HepG2 (cell line): ENCODE measurements at regions of chr19 and their contacts with region 1.

Region 1: GRCh38 chr19:55339048-55339888 is at the start of gene KMT5C:
- DNase-seq: peak; percentile 100
- ATAC-seq: peak; percentile 91
- H3K4me3 ChIP-seq: peak within 1 kb of the TSS; percentile 82 to 99 (median 91)
- H3K27ac ChIP-seq: peak within 1 kb of the TSS; percentile 86
- H3K4me1 ChIP-seq: peaks cover 31% of the 10 kb centered on the region
- H3K27me3 ChIP-seq: no peaks in the 10 kb centered on the region; a peak in 1 of 5 replicates
- CTCF ChIP-seq: peak; percentile 59
- EP300 ChIP-seq: no peak
- POLR2A ChIP-seq: peak in 1 of 2 experiments; percentile 14; a peak in 2 of 4 replicates
- RAD21 ChIP-seq: peak; percentile 19; the same call in 1 of the 2 replicates
- total RNA-seq, gene KMT5C: 2.1 and 5.5 TPM in 2 replicates

Region 2: DNA sequence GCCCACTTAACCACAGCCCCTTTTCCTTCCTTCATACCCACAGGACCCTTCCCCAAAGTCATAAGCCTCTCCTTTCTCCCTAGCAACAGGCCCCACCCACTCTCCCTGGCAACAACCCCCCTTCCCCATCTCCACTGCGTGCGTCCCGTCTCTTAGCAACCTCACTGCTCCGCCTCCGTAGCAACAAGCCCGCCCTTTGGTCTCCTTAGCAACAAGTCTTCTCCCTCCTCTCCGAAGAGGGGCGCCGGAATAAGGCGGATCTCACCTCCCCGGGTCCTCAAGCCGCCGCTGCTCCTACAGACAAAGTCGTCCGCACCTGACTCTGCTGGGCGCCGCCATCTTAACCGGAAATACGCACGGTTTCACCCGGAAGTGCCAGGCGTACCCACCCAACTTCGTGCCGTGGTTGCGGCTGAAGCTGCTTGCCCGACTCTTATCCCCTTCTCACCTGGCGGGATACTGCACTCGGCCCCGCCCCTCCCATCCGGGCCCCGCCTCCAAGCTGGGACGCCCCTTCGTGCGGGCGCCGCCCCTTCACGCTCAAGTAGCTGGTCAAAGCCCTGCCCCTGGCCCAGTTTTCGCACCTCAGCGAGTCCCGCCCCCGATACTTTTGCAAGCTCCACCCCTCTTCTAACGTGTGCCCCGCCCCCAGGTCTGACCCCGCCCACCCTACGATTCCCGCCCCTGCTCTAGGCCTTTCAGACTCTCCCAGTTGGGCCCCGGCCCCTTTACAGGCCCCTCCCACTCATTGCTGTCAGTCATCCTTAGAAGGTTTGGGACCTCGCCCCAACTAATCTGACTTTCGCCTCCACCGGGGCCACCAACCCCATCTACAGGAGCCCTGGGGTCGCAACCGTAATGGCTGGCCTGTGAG is 59.3 kb before region 1 on chr19 and contains the start of gene HSPBP1:
- CTCF ChIA-PET with region 1: no interaction called
- POLR2A ChIA-PET with region 1: interaction called, 11 read pairs
- in situ Hi-C with region 1: no loop called
- intact Hi-C with region 1: no loop called
- DNase-seq: peak; percentile 92
- ATAC-seq: peak; percentile 90
- H3K4me3 ChIP-seq: peak within 1 kb of the TSS; percentile 86 to 97 (median 93)
- H3K27ac ChIP-seq: peak within 1 kb of the TSS; percentile 68
- H3K4me1 ChIP-seq: peaks cover 24% of the 10 kb centered on the region
- H3K27me3 ChIP-seq: peaks cover 0 to 9% of the 10 kb centered on the region in 2 experiments; a peak in 3 of 5 replicates
- CTCF ChIP-seq: no peak
- EP300 ChIP-seq: no peak
- POLR2A ChIP-seq: peak; percentile 72 to 86
- RAD21 ChIP-seq: peak; percentile 10; the same call in 1 of the 2 replicates
- total RNA-seq, gene HSPBP1: 33.7 and 35.9 TPM in 2 replicates

Region 3: GRCh38 chr19:55322204-55322885 is 16.9 kb before region 1 on chr19:
- CTCF ChIA-PET with region 1: no interaction called
- POLR2A ChIA-PET with region 1: interaction called, 11 read pairs
- in situ Hi-C with region 1: no loop called
- intact Hi-C with region 1: no loop called
- DNase-seq: no peak
- ATAC-seq: peak; percentile 52
- H3K4me3 ChIP-seq: no peak overlapping the region
- H3K27ac ChIP-seq: no peak overlapping the region
- H3K4me1 ChIP-seq: peaks cover 43% of the 10 kb centered on the region
- H3K27me3 ChIP-seq: no peaks in the 10 kb centered on the region; a peak in 1 of 5 replicates
- CTCF ChIP-seq: no peak
- EP300 ChIP-seq: no peak
- POLR2A ChIP-seq: no peak
- RAD21 ChIP-seq: no peak

Region 4: GRCh38 chr19:56111601-56112312 is 772.5 kb after region 1 on chr19:
- CTCF ChIA-PET with region 1: no interaction called
- POLR2A ChIA-PET with region 1: no interaction called
- in situ Hi-C with region 1: no loop called
- intact Hi-C with region 1: loop called (anchors 5 kb)
- DNase-seq: peak; percentile 45
- ATAC-seq: peak; percentile 72
- H3K4me3 ChIP-seq: peak overlapping the region in 2 of 3 experiments; percentile 41 to 57; a peak in 3 of 6 replicates
- H3K27ac ChIP-seq: peak overlapping the region; percentile 83
- H3K4me1 ChIP-seq: peaks cover 83% of the 10 kb centered on the region
- H3K27me3 ChIP-seq: no peaks in the 10 kb centered on the region
- CTCF ChIP-seq: no peak
- EP300 ChIP-seq: no peak
- POLR2A ChIP-seq: no peak
- RAD21 ChIP-seq: no peak